ENCODE measurements at regions of chr1 and their contacts with region 1.

Region 1: DNA sequence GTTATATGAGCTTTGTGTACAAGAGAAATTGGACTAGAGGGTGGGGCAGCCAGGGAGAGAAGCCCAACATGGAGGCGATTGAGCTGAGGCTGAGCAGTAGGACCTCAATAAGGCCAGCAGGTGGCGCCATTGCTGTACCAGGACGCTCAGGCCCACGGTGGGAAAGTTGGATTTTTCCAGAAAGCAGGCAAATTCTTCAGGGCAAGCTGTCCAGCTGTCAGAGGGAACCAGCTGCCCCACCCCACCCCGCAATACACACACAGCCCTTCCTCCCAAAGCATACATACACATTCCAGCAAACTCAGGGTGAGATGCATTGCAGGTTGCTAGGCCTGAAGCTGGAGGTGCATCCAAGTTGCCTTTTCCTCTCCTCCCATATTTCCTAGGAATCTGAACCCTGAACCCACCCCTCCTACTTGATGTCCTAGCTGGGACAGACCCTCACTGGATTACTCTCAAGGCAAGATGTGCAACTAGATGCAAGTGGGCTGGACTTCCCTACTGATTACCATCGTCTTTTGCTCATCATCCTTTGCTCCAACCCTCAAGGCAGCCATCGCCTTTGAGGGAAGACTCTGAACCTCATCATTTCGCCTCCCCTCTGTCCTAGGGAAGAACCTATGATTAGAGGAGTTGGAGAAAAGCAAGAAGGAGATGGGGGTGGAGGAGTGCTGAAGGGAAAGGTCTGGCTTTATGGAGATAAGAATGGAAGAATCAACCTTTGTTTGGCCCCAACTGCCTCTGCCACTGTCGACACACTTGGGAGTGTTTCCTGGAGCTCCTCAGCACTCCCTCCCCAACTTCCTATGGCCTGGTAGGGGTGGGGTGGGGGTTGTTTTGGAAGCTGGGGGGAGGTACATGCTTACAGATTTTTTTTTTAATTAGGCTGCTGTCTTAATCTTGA is 25.5 kb downstream of the CD34 start:
- DNase-seq: peak; percentile 84
- H3K4me3 Mint-ChIP-seq: no peak overlapping the region
- H3K27ac Mint-ChIP-seq: no peak overlapping the region
- H3K4me1 Mint-ChIP-seq: peaks cover 34% of the 10 kb centered on the region
- H3K27me3 Mint-ChIP-seq: peaks cover 11% of the 10 kb centered on the region
- CTCF ChIP-seq: peak; percentile 96

Region 2: GRCh38 chr1:207836591-207837347 is 48.6 kb before region 1 on chr1:
- CTCF ChIA-PET with region 1: no interaction called
- intact Hi-C with region 1: no loop called
- DNase-seq: no peak
- H3K4me3 Mint-ChIP-seq: no peak overlapping the region
- H3K27ac Mint-ChIP-seq: no peak overlapping the region
- H3K4me1 Mint-ChIP-seq: no peaks in the 10 kb centered on the region
- H3K27me3 Mint-ChIP-seq: no peaks in the 10 kb centered on the region
- CTCF ChIP-seq: no peak

Region 3: DNA sequence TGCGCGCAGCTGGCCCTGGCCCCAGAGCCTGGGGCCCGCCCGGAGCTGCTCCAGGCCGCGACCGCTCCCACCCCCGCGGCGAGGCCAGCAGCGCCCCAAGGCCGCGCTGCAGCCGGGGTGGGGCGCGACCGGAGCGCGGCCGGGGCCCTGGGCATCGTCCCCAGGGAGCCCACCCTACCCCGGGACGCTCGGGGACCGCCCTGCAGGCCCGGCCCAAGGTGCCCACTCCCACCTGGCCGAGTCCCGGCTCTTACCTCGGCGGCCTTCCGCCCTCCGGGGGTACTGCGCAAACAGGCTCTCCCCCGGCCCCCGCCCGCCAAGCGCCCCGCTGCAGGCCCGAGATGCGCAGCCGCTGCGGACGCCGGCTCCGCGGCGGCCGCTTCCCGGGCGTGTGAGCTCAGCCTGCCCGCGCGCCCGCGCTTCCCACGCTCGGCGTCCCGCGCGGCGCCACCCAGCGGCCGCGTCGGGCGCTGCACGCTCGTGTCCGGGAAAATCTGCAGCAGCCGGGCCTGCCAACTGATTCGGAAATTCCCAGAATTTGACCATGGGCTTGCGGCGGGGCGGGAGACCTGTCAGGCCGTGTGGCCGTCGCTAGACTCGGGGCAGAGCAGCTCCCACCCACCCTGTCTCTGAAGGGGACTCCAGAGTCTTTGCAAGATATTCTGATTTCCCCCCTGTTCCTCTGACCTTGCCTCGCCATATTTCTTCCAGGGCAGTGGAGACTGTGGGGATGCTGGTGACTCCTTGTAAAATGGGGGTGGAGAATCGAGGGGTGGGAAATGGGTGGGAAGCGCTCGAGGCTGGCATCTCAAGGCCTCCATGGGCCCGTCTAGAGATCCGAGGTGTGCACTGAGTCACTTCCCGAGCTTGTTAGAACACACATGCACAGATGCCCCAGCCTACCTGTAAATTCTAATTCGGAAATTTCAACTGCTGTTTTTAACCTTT is 16.3 kb before region 1 on chr1:
- CTCF ChIA-PET with region 1: interaction called, 11 read pairs
- intact Hi-C with region 1: no loop called
- DNase-seq: peak; percentile 86
- H3K4me3 Mint-ChIP-seq: peak overlapping the region; percentile 83
- H3K27ac Mint-ChIP-seq: peak overlapping the region; percentile 36
- H3K4me1 Mint-ChIP-seq: peaks cover 27% of the 10 kb centered on the region
- H3K27me3 Mint-ChIP-seq: no peaks in the 10 kb centered on the region
- CTCF ChIP-seq: peak; percentile 81

Region 4: GRCh38 chr1:207897188-207897587 is 11.8 kb after region 1 on chr1:
- CTCF ChIA-PET with region 1: interaction called, 13 read pairs
- intact Hi-C with region 1: no loop called
- DNase-seq: no peak
- H3K4me3 Mint-ChIP-seq: no peak overlapping the region
- H3K27ac Mint-ChIP-seq: no peak overlapping the region
- H3K4me1 Mint-ChIP-seq: no peaks in the 10 kb centered on the region
- H3K27me3 Mint-ChIP-seq: no peaks in the 10 kb centered on the region
- CTCF ChIP-seq: peak; percentile 65

Region 5: GRCh38 chr1:207935166-207935583 is 49.8 kb after region 1 on chr1:
- CTCF ChIA-PET with region 1: interaction called, 10 read pairs
- intact Hi-C with region 1: no loop called
- DNase-seq: peak; percentile 69
- H3K4me3 Mint-ChIP-seq: peak overlapping the region; percentile 43
- H3K27ac Mint-ChIP-seq: peak overlapping the region; percentile 71
- H3K4me1 Mint-ChIP-seq: peaks cover 62% of the 10 kb centered on the region
- H3K27me3 Mint-ChIP-seq: no peaks in the 10 kb centered on the region
- CTCF ChIP-seq: no peak

Region 6: DNA sequence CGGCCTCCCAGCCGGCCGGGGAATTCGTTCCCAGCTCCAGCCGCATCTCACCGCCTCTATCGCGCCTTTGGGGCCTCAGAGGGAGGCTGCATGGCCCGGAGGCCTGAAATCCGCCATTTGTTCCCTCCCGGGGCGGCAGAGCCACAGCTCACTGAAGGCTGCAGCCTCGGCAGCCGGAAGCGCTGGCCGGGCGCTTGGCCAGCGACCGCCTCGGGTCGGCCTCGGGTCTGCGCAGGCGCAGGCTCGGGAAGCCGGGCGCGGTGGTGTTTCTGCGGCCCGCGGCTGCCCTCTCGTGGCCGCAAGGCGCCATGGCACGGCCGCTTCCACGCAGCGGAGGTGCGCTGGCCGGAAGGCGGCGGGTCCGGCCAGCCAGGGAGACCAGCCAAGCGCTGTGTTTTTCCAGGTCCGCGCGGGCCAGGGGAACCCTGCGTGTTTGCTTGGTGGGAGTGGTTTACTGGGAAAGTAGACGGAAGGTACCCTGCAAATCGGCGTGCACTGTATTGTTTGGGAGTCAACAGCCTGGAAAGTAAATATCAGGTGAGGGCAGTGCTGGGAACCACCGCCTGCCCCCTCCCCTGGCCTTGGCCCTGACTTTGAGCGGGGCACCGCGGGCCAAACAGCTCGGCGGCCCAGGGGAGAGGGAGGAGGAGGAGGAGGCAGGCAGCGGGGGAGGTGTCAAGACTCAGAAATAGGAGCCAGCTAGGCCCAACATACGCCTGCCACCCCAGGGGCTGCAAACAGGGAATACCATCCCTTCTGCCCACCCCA is 78.2 kb after region 1 on chr1:
- CTCF ChIA-PET with region 1: interaction called, 39 read pairs
- intact Hi-C with region 1: loop called (anchors 1 kb)
- DNase-seq: peak; percentile 94
- H3K4me3 Mint-ChIP-seq: peak overlapping the region; percentile 72
- H3K27ac Mint-ChIP-seq: peak overlapping the region; percentile 53
- H3K4me1 Mint-ChIP-seq: peaks cover 22% of the 10 kb centered on the region
- H3K27me3 Mint-ChIP-seq: peaks cover 15% of the 10 kb centered on the region
- CTCF ChIP-seq: peak; percentile 97

Region 7: GRCh38 chr1:207997486-207998268 is 112.3 kb after region 1 on chr1:
- CTCF ChIA-PET with region 1: interaction called, 27 read pairs
- intact Hi-C with region 1: loop called (anchors 1 kb)
- DNase-seq: peak; percentile 82
- H3K4me3 Mint-ChIP-seq: no peak overlapping the region
- H3K27ac Mint-ChIP-seq: no peak overlapping the region
- H3K4me1 Mint-ChIP-seq: no peaks in the 10 kb centered on the region
- H3K27me3 Mint-ChIP-seq: peaks cover 51% of the 10 kb centered on the region
- CTCF ChIP-seq: peak; percentile 75

Region 8: GRCh38 chr1:208093754-208094719 is 208.7 kb after region 1 on chr1:
- CTCF ChIA-PET with region 1: no interaction called
- intact Hi-C with region 1: loop called (anchors 10 kb)
- DNase-seq: peak; percentile 81
- H3K4me3 Mint-ChIP-seq: no peak overlapping the region
- H3K27ac Mint-ChIP-seq: no peak overlapping the region
- H3K4me1 Mint-ChIP-seq: no peaks in the 10 kb centered on the region
- H3K27me3 Mint-ChIP-seq: no peaks in the 10 kb centered on the region
- CTCF ChIP-seq: peak; percentile 83